ENCODE measurements at regions of chr11 and their contacts with region 1.

Region 1: DNA sequence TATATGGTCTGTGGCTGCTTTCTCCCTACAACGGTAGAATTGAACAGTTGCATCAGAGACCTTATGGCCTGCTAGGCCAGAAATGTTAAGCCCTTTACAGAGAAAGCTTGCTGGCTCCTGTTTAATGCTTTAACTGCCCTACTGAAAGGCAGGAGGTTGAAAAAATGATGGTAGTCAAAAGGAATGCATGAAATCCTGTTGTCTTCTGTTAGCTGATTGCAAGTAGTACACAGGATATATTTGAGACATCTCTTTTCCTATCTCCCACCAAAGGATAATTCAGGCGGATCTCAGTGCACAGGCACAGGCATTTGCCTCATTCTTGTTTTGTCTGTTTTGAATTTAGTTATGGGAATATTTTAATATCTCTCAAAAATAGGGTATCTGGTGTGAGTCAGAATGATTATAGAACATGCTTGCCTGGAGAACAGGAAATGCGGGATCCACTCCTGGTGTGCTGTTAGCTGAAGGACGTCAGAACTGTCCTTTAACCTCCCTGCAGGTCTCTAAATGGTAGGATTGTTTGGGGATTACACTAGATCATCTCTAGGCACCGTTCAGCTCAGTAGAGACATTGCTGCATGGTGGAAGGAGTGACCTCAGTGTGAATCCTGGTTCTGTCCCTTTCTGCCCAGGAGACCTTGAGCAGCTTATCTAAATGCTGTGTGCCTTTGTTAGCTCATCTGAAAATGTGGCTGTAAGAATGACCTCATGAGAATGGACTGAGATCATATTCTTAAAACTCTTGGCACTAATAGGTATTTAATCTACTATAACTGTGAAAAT is 49.5 kb downstream of the PACS1 start:
- DNase-seq: peak; percentile 73 to 78
- H3K4me3 ChIP-seq: no peak overlapping the region
- H3K4me3 Mint-ChIP-seq: peak overlapping the region; percentile 50
- H3K27ac Mint-ChIP-seq: peak overlapping the region; percentile 74
- H3K4me1 ChIP-seq: peaks cover 77% of the 10 kb centered on the region
- H3K4me1 Mint-ChIP-seq: peaks cover 52% of the 10 kb centered on the region
- H3K27me3 ChIP-seq: no peaks in the 10 kb centered on the region
- H3K27me3 Mint-ChIP-seq: no peaks in the 10 kb centered on the region
- CTCF ChIP-seq: no peak

Region 2: DNA sequence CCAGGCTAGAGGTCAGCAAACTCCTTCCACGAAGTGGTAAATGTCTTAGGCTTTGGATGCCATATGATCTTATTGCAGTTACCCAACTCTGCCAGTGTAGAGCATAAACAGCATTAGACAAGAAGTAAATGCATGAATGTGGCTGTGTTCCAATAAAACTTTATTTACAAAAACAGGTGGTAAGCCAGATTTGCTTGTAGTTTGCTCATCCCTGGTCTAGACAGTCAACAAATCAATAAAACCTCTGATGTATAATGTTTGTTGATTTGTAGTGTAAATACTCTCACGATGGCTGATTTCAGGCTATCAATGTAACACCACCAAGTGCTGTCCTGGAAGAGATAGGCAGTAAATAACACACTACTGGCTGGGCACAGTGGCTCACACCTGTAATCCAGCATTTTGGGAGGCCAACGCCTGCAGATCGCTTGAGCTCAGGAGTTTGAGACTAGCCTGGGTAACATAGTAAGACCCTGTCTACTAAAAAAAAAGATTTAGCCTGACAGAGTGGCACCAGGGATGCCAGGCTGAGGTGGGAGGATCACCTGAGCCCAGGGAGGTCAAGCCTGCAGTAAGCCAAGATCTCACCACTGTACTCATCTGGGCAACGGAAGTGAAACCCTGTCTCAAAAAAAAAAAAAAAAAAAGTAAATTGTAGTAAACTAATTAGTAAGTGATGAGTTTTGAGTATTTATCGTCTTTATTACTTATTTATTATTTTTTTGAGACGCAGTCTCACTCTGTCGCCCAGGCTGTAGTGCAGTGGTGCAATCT is 86.4 kb before region 1 on chr11:
- CTCF ChIA-PET with region 1: no interaction called
- POLR2A ChIA-PET with region 1: interaction called, 18 read pairs
- intact Hi-C with region 1: no loop called
- DNase-seq: no peak
- H3K4me3 ChIP-seq: no peak overlapping the region
- H3K4me3 Mint-ChIP-seq: no peak overlapping the region
- H3K27ac Mint-ChIP-seq: no peak overlapping the region
- H3K4me1 ChIP-seq: no peaks in the 10 kb centered on the region
- H3K4me1 Mint-ChIP-seq: no peaks in the 10 kb centered on the region
- H3K27me3 ChIP-seq: no peaks in the 10 kb centered on the region
- H3K27me3 Mint-ChIP-seq: no peaks in the 10 kb centered on the region
- CTCF ChIP-seq: no peak

Region 3: DNA sequence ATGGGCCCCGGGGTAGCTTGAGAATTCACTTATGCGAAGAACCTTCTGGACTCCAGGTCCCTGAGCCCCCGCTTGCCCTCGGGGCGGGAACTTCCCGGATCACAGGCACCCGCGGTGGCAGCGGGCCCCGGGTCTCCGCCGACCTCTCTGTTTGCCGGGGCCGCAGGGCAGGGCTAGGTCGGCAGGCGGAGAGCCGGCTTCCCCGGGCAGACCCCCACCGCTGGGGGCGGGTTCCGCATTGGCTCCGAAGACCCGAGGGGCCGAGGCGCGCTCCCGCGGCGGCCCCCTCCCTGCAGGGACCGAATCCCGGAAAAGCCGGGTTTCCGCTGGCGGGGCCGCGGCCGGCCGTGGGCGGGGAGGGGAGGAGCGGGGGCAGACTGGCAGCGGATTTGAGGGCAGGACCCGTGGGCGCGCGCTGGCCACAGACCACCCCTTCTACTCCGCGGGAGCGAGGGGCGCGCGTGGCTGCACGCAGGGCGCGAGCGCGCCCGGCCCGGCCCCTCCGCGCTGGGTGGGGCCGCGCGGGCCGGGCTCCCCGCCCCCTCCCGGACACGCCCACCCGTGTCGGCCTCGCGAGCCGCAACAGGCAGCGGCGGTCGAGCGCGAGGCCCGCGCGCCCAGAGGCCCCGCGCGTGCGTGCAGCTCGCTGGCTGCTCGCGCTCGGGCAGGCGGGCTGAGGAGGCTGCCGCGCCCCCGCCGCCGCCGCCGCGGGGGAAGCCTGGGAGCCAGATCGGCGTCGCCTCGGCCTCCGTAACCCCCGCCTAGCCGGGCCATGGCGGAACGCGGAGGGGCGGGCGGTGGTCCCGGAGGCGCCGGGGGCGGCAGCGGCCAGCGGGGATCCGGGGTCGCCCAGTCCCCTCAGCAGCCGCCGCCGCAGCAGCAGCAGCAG is 49.6 kb before region 1 on chr11 and contains the start of gene PACS1:
- CTCF ChIA-PET with region 1: interaction called, 5 read pairs
- POLR2A ChIA-PET with region 1: interaction called, 10 read pairs
- intact Hi-C with region 1: loop called (anchors 1 kb)
- DNase-seq: peak in 1 of 2 experiments; percentile 78
- H3K4me3 ChIP-seq: peak within 1 kb of the TSS; percentile 83
- H3K4me3 Mint-ChIP-seq: peak within 1 kb of the TSS; percentile 96
- H3K27ac Mint-ChIP-seq: peak within 1 kb of the TSS; percentile 91
- H3K4me1 ChIP-seq: peaks cover 15% of the 10 kb centered on the region; the same call in 1 of the 2 replicates
- H3K4me1 Mint-ChIP-seq: peaks cover 17% of the 10 kb centered on the region
- H3K27me3 ChIP-seq: no peaks in the 10 kb centered on the region
- H3K27me3 Mint-ChIP-seq: no peaks in the 10 kb centered on the region
- CTCF ChIP-seq: no peak
- total RNA-seq, gene PACS1: 82.2 and 95.2 TPM in 2 replicates

Region 4: DNA sequence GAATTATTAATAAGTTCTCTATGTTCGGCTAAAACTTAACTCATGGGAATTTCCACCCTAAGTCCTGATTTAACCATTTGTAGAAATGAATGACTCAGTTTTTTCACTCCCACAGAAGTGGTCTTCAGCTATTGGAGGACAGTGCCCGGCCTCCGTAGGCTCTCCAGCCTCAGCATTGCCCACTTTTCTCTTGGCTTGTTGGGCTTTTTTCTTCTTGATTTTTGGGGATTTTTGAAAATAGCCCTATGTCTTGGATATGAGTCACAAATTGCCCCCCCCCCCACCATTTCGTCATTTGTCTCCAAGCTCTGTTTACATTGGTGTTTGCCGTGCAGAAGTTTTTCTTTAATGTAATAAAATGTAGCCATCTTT is 17.2 kb after region 1 on chr11:
- CTCF ChIA-PET with region 1: no interaction called
- POLR2A ChIA-PET with region 1: interaction called, 3 read pairs
- intact Hi-C with region 1: loop called (anchors 1 kb)
- DNase-seq: no peak
- H3K4me3 ChIP-seq: no peak overlapping the region
- H3K4me3 Mint-ChIP-seq: peak overlapping the region; percentile 11
- H3K27ac Mint-ChIP-seq: peak overlapping the region; percentile 85
- H3K4me1 ChIP-seq: peaks cover 34% of the 10 kb centered on the region
- H3K4me1 Mint-ChIP-seq: peaks cover 30% of the 10 kb centered on the region
- H3K27me3 ChIP-seq: no peaks in the 10 kb centered on the region
- H3K27me3 Mint-ChIP-seq: no peaks in the 10 kb centered on the region
- CTCF ChIP-seq: no peak

Region 5: GRCh38 chr11:66142370-66143263 is 23.1 kb after region 1 on chr11:
- CTCF ChIA-PET with region 1: no interaction called
- POLR2A ChIA-PET with region 1: no interaction called
- intact Hi-C with region 1: loop called (anchors 2 kb)
- DNase-seq: peak; percentile 62 to 70
- H3K4me3 ChIP-seq: no peak overlapping the region
- H3K4me3 Mint-ChIP-seq: peak overlapping the region; percentile 33
- H3K27ac Mint-ChIP-seq: peak overlapping the region; percentile 96
- H3K4me1 ChIP-seq: peaks cover 51% of the 10 kb centered on the region
- H3K4me1 Mint-ChIP-seq: peaks cover 30% of the 10 kb centered on the region
- H3K27me3 ChIP-seq: no peaks in the 10 kb centered on the region
- H3K27me3 Mint-ChIP-seq: no peaks in the 10 kb centered on the region
- CTCF ChIP-seq: no peak

Region 6: DNA sequence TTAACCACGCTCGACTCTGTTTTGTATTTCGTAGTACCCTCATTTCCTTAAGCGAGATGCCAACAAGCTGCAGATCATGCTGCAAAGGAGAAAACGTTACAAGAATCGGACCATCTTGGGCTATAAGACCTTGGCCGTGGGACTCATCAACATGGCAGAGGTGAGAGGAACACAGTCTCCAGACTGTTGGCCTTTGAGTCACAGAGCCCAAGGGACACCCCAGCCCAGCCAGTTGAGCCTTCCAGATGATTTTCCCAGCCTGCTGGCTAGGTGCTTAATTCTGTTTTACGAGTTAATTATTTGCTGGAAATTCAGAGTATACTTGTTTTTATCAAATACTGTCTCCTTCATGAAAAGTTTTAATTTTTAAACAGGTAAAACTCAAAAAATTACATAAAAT is 91.6 kb after region 1 on chr11:
- CTCF ChIA-PET with region 1: no interaction called
- POLR2A ChIA-PET with region 1: no interaction called
- intact Hi-C with region 1: no loop called
- DNase-seq: no peak
- H3K4me3 ChIP-seq: no peak overlapping the region
- H3K4me3 Mint-ChIP-seq: no peak overlapping the region
- H3K27ac Mint-ChIP-seq: no peak overlapping the region
- H3K4me1 ChIP-seq: no peaks in the 10 kb centered on the region
- H3K4me1 Mint-ChIP-seq: no peaks in the 10 kb centered on the region
- H3K27me3 ChIP-seq: no peaks in the 10 kb centered on the region
- H3K27me3 Mint-ChIP-seq: no peaks in the 10 kb centered on the region
- CTCF ChIP-seq: no peak

Measured in Caco-2 (cell line).